ENCODE measurements at regions of chr16 and their contacts with region 1.

Region 1: DNA sequence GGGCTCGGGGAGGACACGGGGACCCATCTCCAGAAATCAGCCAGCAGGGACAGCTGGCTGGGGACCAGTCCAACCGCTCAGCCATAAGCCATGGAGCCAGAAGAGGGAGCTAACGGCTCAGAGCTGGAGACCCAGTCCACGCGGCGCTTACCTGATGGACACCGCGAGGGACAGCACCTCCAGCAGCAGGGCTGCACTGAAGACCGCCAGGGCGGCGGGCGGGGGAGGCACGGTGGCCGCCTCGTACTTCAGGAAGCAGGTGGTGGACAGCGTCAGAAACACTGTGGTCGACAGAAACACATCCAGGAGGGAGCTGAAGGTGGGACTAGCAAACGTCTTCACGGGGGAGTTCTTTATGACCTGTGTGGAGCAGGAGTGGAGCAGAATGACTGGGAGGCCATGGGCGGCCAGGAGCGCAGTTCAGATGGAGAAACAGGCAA is 102.6 kb upstream of the CREBBP start:
- DNase-seq: peak; percentile 62 to 87 (median 82)
- ATAC-seq: peak; percentile 80 to 82
- H3K4me3 ChIP-seq: no peak overlapping the region
- H3K27ac ChIP-seq: no peak overlapping the region
- H3K4me1 ChIP-seq: no peaks in the 10 kb centered on the region
- H3K27me3 ChIP-seq: no peaks in the 10 kb centered on the region

Region 2: DNA sequence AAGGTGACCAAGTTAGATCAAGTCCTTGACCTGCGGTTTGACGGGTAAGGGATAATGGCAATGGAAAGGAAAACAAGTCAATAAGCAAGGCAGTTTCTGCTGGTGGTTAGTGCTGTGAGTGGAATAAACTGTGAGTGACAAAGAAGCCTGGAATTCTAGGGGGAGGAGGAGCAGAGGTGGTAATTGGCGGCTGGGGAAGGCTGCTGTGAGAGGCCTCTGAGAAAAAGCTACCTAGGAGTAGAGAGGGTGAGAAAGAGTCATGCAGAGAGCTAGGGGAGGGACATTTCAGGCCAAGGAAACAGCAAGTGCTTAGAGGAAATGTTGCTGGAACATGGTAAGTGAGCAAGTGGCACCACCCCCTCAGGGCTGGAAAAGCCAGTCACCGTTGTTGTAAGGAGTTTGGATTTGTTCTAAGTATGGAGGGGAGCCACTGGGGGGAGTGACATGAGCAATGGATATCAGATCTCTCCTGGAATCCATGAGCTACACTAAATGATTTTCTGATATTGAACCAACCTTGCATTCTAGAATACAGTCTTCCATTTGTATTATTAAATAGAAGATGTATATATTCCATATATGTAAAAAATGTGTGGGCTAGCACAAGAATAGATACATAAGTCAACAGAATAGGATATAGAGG is 412.6 kb before region 1 on chr16:
- intact Hi-C with region 1: no loop called
- DNase-seq: no peak
- ATAC-seq: no peak
- H3K4me3 ChIP-seq: no peak overlapping the region
- H3K27ac ChIP-seq: no peak overlapping the region
- H3K4me1 ChIP-seq: no peaks in the 10 kb centered on the region
- H3K27me3 ChIP-seq: no peaks in the 10 kb centered on the region

Region 3: DNA sequence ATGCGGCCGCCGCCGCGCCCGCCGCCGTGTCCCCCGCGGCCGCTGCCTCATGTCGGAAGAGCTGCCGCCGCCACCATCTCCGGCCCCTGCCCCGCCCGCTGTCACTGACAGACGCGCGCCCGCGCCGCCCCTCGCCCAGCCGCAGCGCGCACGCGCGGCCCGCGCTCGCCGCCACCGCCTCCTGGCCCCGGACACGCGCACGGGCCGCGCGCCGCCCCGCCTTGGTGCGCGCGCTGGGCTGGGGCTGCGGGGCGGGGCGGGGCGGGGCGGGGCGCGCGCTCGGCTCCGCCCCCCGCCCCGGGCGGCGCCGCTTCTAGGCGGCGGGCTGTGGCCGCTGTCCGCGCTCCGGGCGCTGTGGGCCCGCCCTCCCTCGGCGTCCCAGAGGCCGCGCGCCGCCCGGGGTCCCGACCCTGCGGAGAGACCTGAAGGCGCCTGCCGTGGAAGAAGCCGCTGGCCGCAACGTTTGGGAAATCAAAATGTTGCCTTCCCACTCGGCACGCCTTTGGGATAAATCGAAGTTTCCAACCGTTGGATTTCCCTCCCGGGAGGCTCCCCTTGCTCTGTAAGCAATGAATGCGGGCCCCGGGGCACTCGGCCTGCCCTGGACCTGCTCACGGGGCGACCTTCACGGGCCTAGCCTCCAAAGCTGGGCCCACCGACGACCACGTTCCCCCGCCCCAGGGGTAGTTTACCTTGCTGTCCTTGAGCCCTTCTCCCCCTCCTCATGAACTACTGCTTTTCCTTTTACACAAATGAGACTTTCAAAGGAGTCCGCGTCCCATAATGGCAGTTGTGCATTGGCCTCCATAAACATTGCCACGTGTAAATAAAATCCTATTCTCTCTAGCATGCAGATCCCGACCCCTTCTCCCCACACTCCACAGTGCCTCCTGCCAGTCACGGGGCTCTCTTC is 133.5 kb after region 1 on chr16 and contains the start of gene ADCY9:
- intact Hi-C with region 1: loop called in 1 of 4 experiments (anchors 10 kb)
- DNase-seq: peak; percentile 81 to 95 (median 93)
- ATAC-seq: peak; percentile 86 to 90
- H3K4me3 ChIP-seq: peak within 1 kb of the TSS; percentile 98
- H3K27ac ChIP-seq: peak within 1 kb of the TSS; percentile 37
- H3K4me1 ChIP-seq: peaks cover 12% of the 10 kb centered on the region
- H3K27me3 ChIP-seq: no peaks in the 10 kb centered on the region
- total RNA-seq, gene ADCY9: 25.9 to 31.4 (median 28.9) TPM

Region 4: GRCh38 chr16:4176612-4177417 is 193.7 kb after region 1 on chr16:
- intact Hi-C with region 1: loop called in 2 of 4 experiments (anchors 10 kb)
- DNase-seq: no peak
- ATAC-seq: no peak
- H3K4me3 ChIP-seq: no peak overlapping the region
- H3K27ac ChIP-seq: no peak overlapping the region
- H3K4me1 ChIP-seq: no peaks in the 10 kb centered on the region
- H3K27me3 ChIP-seq: no peaks in the 10 kb centered on the region

Region 5: DNA sequence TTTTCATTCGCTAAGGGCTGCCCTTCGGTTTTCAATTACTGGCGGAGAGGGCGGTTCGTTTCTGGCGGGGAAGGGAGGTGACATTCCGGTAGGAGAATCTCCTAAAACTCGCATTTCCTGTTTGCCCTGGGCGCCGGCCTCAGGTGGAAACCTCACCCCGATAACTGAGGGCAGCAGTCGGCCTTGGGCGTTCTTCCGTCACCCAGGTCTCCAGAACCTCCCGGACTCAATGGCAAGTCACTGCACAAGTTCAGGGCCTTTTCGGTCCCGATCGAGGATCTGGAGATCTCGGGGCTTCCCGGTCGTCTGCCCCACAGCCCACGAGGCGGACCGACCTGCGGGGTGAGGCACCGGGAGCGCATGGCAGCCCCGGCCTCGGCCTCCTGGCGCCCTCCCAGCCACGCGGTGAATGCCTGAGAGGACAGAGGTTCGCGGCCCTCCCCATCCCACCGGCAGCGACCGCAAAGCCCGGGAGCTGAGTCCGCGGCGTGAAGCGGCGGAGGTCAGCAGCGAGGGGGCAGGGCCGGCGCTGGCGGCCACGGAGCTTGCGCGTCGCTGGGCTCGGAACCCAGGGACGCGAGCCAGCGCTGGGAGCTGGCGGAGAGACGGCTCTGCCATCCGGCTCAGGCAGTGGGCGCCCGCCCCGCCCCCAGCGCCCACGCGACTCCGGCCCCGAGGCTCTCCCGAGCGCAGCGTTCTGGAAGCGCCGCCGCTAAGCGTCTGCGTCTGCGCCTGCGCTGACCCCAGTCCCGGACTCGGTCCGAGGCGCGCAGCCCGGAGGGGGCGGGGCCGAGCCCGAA is 200.3 kb after region 1 on chr16:
- intact Hi-C with region 1: loop called in 2 of 4 experiments (anchors 10 kb)
- DNase-seq: peak; percentile 94 to 99 (median 97)
- ATAC-seq: peak; percentile 97 to 98
- H3K4me3 ChIP-seq: peak overlapping the region; percentile 43
- H3K27ac ChIP-seq: peak overlapping the region; percentile 65
- H3K4me1 ChIP-seq: no peaks in the 10 kb centered on the region
- H3K27me3 ChIP-seq: no peaks in the 10 kb centered on the region

Region 6: GRCh38 chr16:4253394-4254150 is 270.5 kb after region 1 on chr16:
- intact Hi-C with region 1: loop called in 1 of 4 experiments (anchors 5 kb)
- DNase-seq: peak; percentile 100
- ATAC-seq: peak; percentile 98
- H3K4me3 ChIP-seq: peak overlapping the region; percentile 58
- H3K27ac ChIP-seq: peak overlapping the region; percentile 89
- H3K4me1 ChIP-seq: no peaks in the 10 kb centered on the region
- H3K27me3 ChIP-seq: no peaks in the 10 kb centered on the region